ENCODE measurements at regions of chr16 and their contacts with region 1.

Region 1: DNA sequence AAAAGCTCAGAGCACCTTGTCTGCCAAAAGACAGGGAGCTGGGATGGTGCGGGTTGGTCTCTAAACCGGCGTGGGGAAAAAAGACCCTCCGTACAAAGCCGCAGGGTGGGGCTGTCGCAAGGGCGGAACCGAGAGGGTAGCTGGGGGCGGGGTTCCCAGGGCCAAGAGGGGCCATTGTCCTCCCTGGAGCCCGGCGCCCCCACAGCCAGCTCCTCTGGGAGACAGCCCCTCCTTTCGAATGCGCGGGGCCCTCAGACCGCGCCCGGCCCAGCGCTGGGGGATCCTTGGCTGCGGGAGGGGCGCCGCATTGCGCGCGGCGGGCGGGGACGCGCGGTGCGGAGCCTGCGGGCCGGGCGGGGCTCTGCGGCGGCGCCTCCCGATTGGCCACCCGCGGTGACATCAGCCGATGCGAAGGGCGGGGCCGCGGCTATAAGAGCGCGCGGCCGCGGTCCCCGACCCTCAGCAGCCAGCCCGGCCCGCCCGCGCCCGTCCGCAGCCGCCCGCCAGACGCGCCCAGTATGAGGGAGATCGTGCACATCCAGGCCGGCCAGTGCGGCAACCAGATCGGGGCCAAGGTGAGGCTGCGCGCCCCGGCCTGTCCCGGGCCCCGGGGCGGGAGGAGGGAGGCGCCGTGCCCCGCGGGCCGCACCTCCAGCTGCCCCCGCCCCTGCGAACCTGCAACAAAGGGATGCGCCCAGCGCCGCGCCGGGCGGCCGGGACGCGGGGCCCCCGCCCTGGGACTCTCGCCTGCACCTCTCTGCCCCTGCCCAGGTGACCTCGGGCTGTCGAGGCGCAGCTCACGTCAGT is at the start of gene TUBB3:
- DNase-seq: peak; percentile 73
- ATAC-seq: peak; percentile 18
- H3K4me3 ChIP-seq: peak within 1 kb of the TSS; percentile 74 to 90 (median 81)
- H3K27ac ChIP-seq: peak within 1 kb of the TSS; percentile 88
- H3K4me1 ChIP-seq: peaks cover 52% of the 10 kb centered on the region
- H3K27me3 ChIP-seq: no peaks in the 10 kb centered on the region; a peak in 1 of 5 replicates
- CTCF ChIP-seq: peak; percentile 37
- EP300 ChIP-seq: peak in 1 of 2 experiments; percentile 29; a peak in 1 of 4 replicates
- POLR2A ChIP-seq: peak in 1 of 2 experiments; percentile 90; a peak in 2 of 4 replicates
- RAD21 ChIP-seq: peak; percentile 64
- total RNA-seq, gene TUBB3: 161 and 185 TPM in 2 replicates

Region 2: GRCh38 chr16:89842471-89843408 is 80.3 kb before region 1 on chr16:
- CTCF ChIA-PET with region 1: no interaction called
- POLR2A ChIA-PET with region 1: interaction called, 10 read pairs
- in situ Hi-C with region 1: no loop called
- intact Hi-C with region 1: no loop called
- DNase-seq: peak; percentile 87
- ATAC-seq: peak; percentile 60
- H3K4me3 ChIP-seq: peak overlapping the region; percentile 14 to 42 (median 16); a peak in 5 of 6 replicates
- H3K27ac ChIP-seq: peak overlapping the region; percentile 47
- H3K4me1 ChIP-seq: peaks cover 43% of the 10 kb centered on the region
- H3K27me3 ChIP-seq: no peaks in the 10 kb centered on the region
- CTCF ChIP-seq: no peak; the same call in 1 of the 2 replicates
- EP300 ChIP-seq: no peak
- POLR2A ChIP-seq: no peak; a peak in 1 of 4 replicates
- RAD21 ChIP-seq: no peak

Region 3: DNA sequence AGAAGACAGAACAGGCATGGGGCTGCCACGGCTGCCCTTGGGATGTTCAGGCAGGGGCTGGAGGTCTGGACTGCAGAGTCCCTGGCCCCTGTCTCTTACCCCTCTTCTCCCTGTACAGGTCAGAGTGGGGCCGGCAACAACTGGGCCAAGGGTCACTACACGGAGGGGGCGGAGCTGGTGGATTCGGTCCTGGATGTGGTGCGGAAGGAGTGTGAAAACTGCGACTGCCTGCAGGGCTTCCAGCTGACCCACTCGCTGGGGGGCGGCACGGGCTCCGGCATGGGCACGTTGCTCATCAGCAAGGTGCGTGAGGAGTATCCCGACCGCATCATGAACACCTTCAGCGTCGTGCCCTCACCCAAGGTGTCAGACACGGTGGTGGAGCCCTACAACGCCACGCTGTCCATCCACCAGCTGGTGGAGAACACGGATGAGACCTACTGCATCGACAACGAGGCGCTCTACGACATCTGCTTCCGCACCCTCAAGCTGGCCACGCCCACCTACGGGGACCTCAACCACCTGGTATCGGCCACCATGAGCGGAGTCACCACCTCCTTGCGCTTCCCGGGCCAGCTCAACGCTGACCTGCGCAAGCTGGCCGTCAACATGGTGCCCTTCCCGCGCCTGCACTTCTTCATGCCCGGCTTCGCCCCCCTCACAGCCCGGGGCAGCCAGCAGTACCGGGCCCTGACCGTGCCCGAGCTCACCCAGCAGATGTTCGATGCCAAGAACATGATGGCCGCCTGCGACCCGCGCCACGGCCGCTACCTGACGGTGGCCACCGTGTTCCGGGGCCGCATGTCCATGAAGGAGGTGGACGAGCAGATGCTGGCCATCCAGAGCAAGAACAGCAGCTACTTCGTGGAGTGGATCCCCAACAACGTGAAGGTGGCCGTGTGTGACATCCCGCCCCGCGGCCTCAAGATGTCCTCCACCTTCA is 11.8 kb after region 1 on chr16:
- CTCF ChIA-PET with region 1: no interaction called
- POLR2A ChIA-PET with region 1: interaction called, 86 read pairs
- in situ Hi-C with region 1: no loop called
- intact Hi-C with region 1: no loop called
- DNase-seq: no peak
- ATAC-seq: no peak
- H3K4me3 ChIP-seq: no peak overlapping the region
- H3K27ac ChIP-seq: no peak overlapping the region
- H3K4me1 ChIP-seq: peaks cover 25% of the 10 kb centered on the region
- H3K27me3 ChIP-seq: peaks cover 0 to 14% of the 10 kb centered on the region in 2 experiments; a peak in 2 of 5 replicates
- CTCF ChIP-seq: no peak
- EP300 ChIP-seq: no peak
- POLR2A ChIP-seq: no peak
- RAD21 ChIP-seq: no peak

Region 4: DNA sequence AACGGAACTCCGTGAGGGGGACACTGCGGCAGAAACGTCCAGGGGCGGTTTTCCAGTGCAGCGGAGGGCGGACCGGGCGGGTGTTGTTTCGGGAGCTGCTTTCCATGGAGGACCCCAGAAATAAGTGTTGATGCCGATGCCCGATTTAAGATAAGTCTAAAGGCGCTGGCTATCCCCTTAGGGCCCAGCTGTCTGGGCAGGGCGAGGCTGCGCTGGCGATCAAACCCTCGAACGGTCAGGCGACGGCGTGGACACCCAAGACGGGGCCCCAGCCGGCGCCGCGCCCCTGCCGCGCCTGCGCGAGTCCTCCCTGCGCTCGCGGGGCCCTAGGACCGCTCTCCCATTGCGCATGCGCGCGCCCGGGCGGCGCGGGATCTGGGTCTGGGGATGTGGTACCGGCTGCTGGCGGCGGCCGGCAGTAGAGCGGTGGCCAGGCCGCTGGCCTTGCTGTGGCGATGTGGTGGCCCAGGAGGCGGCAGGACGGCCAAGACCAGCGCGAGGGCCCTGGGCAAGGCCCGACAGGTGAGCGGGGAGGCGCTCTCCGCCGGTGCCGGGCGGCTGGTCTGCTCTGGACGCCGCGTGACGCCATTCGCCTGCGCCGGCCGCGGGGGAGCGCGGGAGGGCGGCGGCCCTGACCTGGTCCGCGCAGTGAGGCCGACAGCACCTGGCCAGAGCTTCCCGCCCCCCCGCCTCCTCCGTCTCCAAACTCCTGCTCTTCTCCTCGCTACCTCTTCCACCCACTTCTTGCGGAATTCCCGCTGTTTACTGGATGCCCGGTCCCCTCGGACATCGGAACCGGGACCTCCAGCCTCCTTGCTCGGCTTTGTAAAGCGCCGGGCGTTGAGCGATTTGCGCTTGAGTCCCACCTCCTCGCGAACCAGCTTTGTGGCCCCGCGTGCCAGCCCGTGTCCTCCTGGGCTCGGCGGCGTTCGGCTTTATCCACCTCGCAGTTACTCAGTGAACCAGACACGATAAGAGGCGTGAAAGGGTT is 49.5 kb after region 1 on chr16:
- CTCF ChIA-PET with region 1: no interaction called
- POLR2A ChIA-PET with region 1: interaction called, 84 read pairs
- in situ Hi-C with region 1: no loop called
- intact Hi-C with region 1: no loop called
- DNase-seq: peak; percentile 92
- ATAC-seq: peak; percentile 85
- H3K4me3 ChIP-seq: peak overlapping the region; percentile 76 to 96 (median 95)
- H3K27ac ChIP-seq: peak overlapping the region; percentile 88
- H3K4me1 ChIP-seq: peaks cover 49% of the 10 kb centered on the region
- H3K27me3 ChIP-seq: no peaks in the 10 kb centered on the region; a peak in 1 of 5 replicates
- CTCF ChIP-seq: peak; percentile 31; the same call in 1 of the 2 replicates
- EP300 ChIP-seq: peak in 1 of 2 experiments; percentile 47; a peak in 1 of 4 replicates
- POLR2A ChIP-seq: peak; percentile 92 to 97
- RAD21 ChIP-seq: peak; percentile 64; the same call in 1 of the 2 replicates

Region 5: DNA sequence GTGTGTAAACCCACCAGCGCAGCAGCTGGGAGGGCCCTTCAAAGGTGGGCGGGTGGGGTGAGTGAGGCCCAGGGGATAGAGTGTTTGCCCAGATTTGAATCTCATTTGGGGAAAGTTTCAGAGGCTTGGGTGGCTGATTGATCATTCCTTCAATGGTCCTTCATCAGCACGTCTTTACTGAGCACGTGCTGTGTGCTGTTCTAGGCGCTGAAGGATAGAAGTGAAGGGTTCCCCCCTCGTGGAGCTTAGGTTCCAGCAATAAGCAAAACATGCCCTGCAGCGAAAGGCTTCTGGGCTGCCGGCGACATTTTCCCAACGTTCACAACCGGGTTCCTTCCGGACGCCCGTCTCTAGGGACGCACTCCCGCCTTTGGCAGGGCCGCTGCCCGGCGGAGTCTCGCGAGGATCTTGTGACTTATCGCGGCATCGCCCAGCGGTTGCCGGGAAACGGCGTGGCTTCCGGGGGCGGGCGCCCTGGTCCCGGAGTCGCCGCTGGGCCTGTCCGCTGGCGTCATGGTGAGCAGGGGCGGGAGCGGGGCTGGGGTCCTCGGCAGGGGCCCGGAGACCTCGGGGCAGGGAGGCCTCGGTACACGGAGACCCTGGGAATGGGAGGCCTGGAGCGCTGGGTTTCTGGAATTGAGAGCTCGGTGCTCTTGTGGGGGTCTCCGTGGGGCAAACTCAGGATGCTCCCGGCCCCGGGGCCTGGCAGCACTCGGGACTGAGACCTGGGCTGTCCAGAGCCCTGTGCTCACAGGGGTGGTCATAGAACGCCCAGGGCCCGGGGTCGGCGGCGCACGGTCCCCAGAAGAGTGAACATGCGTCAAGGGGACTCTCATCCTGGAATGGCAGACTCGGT is 99.3 kb after region 1 on chr16:
- CTCF ChIA-PET with region 1: no interaction called
- POLR2A ChIA-PET with region 1: interaction called, 12 read pairs
- in situ Hi-C with region 1: loop called (anchors 5 kb)
- intact Hi-C with region 1: loop called (anchors 5 kb)
- DNase-seq: peak; percentile 92
- ATAC-seq: peak; percentile 79
- H3K4me3 ChIP-seq: peak overlapping the region; percentile 82 to 87 (median 82)
- H3K27ac ChIP-seq: peak overlapping the region; percentile 75
- H3K4me1 ChIP-seq: peaks cover 44% of the 10 kb centered on the region
- H3K27me3 ChIP-seq: no peaks in the 10 kb centered on the region; a peak in 1 of 5 replicates
- CTCF ChIP-seq: no peak
- EP300 ChIP-seq: peak in 1 of 2 experiments; percentile 28; a peak in 2 of 4 replicates
- POLR2A ChIP-seq: peak; percentile 70 to 78
- RAD21 ChIP-seq: peak; percentile 17; the same call in 1 of the 2 replicates

Measured in HepG2 (cell line).